CD8-positive, alpha-beta memory T cell (primary cell): ENCODE measurements at regions of chr3 and their contacts with region 1.

Region 1: DNA sequence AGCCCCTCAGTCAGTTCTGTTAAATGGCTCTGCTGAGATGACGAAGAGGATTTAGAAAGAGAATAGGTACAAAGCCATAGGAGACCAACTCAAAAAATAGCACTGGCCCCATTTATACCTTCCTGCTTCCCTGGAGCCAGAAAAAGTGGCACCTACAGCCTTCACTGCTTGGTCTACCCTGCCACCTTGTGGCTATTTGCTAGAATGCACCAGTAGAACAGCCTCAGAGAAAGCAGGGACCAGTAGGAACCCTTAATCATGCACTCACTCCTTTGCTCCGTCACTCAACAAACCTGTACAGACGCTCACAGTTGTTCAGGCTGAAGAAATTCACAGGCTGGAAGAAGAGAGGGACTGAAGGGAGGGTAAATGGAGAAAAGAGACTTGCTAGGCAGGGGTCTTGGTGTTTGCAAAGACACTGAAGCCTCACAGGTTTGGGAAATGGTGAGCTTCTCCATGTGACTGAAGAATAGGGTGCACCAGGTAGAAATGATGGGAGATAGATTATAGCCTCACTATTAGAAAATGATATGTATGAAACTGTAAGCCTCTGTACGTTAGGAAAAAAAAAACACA is 12.1 kb upstream of the RTP2 start:
- DNase-seq: peak; percentile 47 to 79 (median 61)
- H3K4me3 ChIP-seq: no peak overlapping the region
- H3K4me3 Mint-ChIP-seq: peak overlapping the region in 1 of 7 donors; percentile 57
- H3K27ac ChIP-seq: no peak overlapping the region
- H3K27ac Mint-ChIP-seq: peak overlapping the region in 5 of 8 donors; percentile 2 to 72 (median 10)
- H3K4me1 ChIP-seq: peaks cover 6% of the 10 kb centered on the region
- H3K4me1 Mint-ChIP-seq: peaks cover 13 to 17% (median 17%) of the 10 kb centered on the region in 3 donors
- H3K27me3 ChIP-seq: no peaks in the 10 kb centered on the region
- H3K27me3 Mint-ChIP-seq: no peaks in the 10 kb centered on the region

Region 2: DNA sequence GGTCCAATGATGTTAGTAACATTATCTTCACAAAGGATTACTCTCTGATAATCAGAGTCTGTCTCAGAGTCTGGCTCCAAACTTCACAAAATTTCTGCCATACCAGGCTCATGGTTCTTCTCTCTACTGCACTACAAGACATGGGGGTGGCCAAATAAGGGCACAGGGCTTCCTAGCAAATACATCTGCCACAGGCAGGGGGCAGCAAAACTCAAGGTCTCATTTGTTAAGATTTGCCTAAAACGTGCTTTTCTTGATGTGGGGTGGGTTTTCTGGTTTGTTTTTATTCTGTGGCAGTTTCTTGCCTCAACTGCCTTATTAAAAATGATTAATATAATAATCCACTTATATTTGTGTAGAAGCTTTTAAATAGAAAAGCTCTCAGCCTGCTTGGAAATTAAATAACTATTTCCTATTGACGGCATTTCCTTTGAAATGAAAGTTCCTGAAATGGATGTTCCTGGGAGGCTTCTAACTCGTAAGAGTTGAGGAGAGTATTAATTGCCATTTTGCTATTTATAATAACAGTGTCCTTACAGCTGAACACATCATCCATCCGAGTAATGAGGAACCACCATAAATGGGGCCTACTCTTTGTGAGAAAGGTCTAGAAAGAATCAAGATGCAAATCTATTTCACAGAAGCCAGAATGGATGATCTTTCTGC is 98.1 kb before region 1 on chr3:
- CTCF ChIA-PET with region 1: interaction called, 16 read pairs
- POLR2A ChIA-PET with region 1: no interaction called
- DNase-seq: peak; percentile 16 to 53 (median 20)
- H3K4me3 ChIP-seq: no peak overlapping the region
- H3K4me3 Mint-ChIP-seq: no peak overlapping the region
- H3K27ac ChIP-seq: no peak overlapping the region
- H3K27ac Mint-ChIP-seq: no peak overlapping the region
- H3K4me1 ChIP-seq: no peaks in the 10 kb centered on the region
- H3K4me1 Mint-ChIP-seq: peaks cover 5 to 13% (median 6%) of the 10 kb centered on the region in 3 donors
- H3K27me3 ChIP-seq: no peaks in the 10 kb centered on the region
- H3K27me3 Mint-ChIP-seq: peaks cover 0 to 18% of the 10 kb centered on the region in 2 donors

Region 3: DNA sequence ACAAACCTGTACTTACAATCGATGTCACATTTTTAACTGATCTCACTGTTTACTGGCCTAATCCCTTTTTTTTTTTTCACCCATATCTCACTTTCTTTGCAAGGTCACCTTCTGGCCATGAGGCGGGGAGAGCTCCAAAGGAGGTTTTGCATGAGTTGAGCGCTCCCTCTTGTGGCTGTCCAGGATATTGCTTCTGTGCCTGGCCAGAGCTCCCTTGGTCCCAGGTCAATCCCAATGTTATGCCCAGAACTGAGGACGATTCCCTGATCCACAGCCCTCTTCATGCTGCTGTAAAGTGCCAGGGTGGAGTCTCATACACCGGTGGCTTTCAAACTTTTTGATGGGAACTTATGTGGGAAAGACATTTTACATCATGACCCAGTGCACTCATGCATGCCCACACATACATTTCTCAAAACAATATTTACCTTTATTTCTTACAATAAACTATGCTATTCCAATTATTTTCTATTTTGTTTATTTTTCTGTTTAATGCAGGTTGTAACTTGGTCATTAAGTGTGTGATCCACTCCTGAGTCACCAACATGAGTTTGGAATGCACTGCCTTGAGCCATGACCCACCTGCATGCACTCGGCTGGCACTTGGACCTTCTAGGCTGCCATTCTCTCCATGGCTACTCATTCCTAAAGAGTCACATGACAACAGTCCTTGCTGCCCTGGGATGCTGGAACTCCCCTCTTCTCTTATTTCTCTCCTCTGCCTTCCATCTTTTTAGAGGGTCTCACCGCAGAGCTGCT is 34.7 kb before region 1 on chr3:
- CTCF ChIA-PET with region 1: interaction called, 14 read pairs
- POLR2A ChIA-PET with region 1: no interaction called
- DNase-seq: peak; percentile 30 to 70 (median 50)
- H3K4me3 ChIP-seq: no peak overlapping the region
- H3K4me3 Mint-ChIP-seq: no peak overlapping the region
- H3K27ac ChIP-seq: no peak overlapping the region
- H3K27ac Mint-ChIP-seq: peak overlapping the region in 2 of 8 donors; percentile 23 to 46
- H3K4me1 ChIP-seq: no peaks in the 10 kb centered on the region
- H3K4me1 Mint-ChIP-seq: peaks cover 0 to 4% (median 2%) of the 10 kb centered on the region in 3 donors
- H3K27me3 ChIP-seq: no peaks in the 10 kb centered on the region
- H3K27me3 Mint-ChIP-seq: peaks cover 13 to 58% of the 10 kb centered on the region in 2 donors

Region 4: GRCh38 chr3:187689984-187690383 is 24.5 kb before region 1 on chr3:
- CTCF ChIA-PET with region 1: no interaction called
- POLR2A ChIA-PET with region 1: no interaction called
- DNase-seq: no peak
- H3K4me3 ChIP-seq: no peak overlapping the region
- H3K4me3 Mint-ChIP-seq: no peak overlapping the region
- H3K27ac ChIP-seq: no peak overlapping the region
- H3K27ac Mint-ChIP-seq: no peak overlapping the region
- H3K4me1 ChIP-seq: no peaks in the 10 kb centered on the region
- H3K4me1 Mint-ChIP-seq: no peaks in the 10 kb centered on the region
- H3K27me3 ChIP-seq: no peaks in the 10 kb centered on the region
- H3K27me3 Mint-ChIP-seq: peaks cover 23 to 40% of the 10 kb centered on the region in 2 donors

Region 5: DNA sequence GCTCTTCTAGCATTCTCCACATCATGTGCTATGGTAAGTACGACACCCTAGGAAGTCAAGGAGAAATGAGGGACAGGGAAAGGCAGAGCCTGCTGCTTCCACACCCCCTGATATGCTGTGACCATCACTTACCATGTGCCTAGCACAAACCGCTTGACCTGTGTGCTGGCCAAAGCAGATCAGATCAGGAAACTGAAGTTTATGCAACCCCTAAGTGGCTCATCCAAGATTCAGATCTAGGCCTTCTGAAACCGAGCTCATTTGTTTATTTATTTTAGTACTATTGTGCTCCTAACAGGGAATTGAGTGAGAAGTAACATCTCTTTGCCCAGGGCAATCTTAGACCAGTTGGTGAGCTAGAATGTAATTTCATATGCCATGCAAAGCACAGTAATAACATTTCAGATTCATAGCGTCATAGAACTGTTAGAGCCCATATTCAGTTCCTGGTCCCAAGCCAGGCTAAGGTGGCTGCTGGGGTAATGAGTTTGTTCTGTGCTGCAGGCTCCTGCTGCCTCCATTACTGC is 11.9 kb before region 1 on chr3 and contains the start of gene RTP2:
- CTCF ChIA-PET with region 1: interaction called, 11 read pairs
- POLR2A ChIA-PET with region 1: no interaction called
- DNase-seq: no peak
- H3K4me3 ChIP-seq: no peak within 1 kb of the TSS
- H3K4me3 Mint-ChIP-seq: no peak within 1 kb of the TSS
- H3K27ac ChIP-seq: no peak within 1 kb of the TSS
- H3K27ac Mint-ChIP-seq: peak within 1 kb of the TSS in 1 of 8 donors; percentile 15
- H3K4me1 ChIP-seq: no peaks in the 10 kb centered on the region
- H3K4me1 Mint-ChIP-seq: peaks cover 0 to 2% (median 0%) of the 10 kb centered on the region in 3 donors
- H3K27me3 ChIP-seq: no peaks in the 10 kb centered on the region
- H3K27me3 Mint-ChIP-seq: peaks cover 7 to 9% of the 10 kb centered on the region in 2 donors
- total RNA-seq, gene RTP2: not detected